ENCODE measurements at regions of chr3 and their contacts with region 1.

Region 1: DNA sequence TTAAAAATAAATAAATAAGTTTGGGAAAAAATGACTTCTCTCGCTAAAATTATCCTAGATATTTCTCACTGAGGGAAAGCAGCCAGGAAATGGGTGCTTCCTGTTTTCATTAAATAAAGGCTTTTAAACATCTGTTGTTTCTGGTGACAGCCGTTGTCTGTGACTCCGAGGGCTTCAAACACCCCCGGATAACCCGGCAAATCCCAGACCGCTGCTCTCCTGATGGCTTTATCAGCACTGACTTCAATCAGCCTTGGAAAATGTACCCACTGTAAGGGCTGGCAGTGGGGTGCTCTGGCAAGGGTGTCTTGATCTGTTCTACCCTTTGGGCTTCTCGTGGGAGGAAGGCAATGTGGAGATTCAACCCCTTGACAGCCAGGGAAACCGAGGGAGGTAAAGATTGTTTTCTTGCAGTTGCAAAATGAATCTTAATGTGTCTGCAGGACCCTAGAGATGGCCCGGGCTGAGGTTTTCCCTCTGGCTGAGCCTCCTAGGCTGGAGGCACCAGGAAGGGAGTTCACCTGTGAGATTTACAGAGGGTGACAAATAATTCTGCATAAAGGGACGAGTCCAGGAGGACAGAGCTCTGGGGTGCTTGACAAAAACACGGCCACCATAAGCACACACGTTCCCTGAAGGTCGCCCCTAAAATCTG is 33.6 kb upstream of the SEC13 start:
- DNase-seq: peak; percentile 46
- H3K4me3 ChIP-seq: no peak overlapping the region
- H3K27ac ChIP-seq: no peak overlapping the region
- H3K4me1 ChIP-seq: no peaks in the 10 kb centered on the region
- H3K27me3 ChIP-seq: no peaks in the 10 kb centered on the region
- CTCF ChIP-seq: no peak

Region 2: GRCh38 chr3:10026084-10026890 is 328.2 kb before region 1 on chr3 and contains the start of gene FANCD2:
- CTCF ChIA-PET with region 1: no interaction called
- POLR2A ChIA-PET with region 1: interaction called, 10 read pairs
- intact Hi-C with region 1: no loop called
- DNase-seq: peak; percentile 94
- H3K4me3 ChIP-seq: peak within 1 kb of the TSS; percentile 86
- H3K27ac ChIP-seq: peak within 1 kb of the TSS; percentile 91
- H3K4me1 ChIP-seq: peaks cover 7% of the 10 kb centered on the region
- H3K27me3 ChIP-seq: no peaks in the 10 kb centered on the region
- CTCF ChIP-seq: no peak
- total RNA-seq, gene FANCD2: 64.6 and 69.2 TPM in 2 replicates

Region 3: DNA sequence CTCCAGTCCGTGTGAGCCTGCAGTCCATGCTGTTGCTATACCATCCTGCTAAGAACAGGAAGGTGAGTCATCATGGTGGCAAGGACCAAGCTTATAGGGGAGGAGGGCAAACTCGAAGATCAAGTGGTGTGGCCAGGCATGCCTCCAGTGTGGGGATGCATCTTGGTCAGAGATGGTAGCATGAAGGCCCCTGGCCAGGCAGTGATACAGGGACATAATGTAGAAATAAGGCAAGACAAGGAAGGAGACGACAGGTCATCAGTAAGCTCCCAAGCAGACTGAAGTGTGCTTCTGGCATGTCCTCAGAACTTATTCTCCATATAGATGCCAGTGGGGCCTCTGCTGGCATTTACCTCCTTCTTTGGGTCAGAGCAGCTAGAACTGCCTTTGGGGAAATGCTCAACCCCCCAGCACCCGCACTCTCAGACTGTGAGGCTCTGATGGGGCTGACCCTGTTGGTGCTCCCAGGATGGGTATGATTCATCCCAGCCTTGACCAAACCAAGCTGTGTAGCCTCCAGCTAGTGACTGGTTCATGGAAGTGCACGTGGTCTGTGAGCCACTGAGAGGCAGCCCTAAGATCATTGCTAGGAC is 203.4 kb after region 1 on chr3:
- CTCF ChIA-PET with region 1: no interaction called
- POLR2A ChIA-PET with region 1: no interaction called
- intact Hi-C with region 1: no loop called
- DNase-seq: no peak
- H3K4me3 ChIP-seq: no peak overlapping the region
- H3K27ac ChIP-seq: no peak overlapping the region
- H3K4me1 ChIP-seq: no peaks in the 10 kb centered on the region
- H3K27me3 ChIP-seq: peaks cover 7% of the 10 kb centered on the region
- CTCF ChIP-seq: no peak

Measured in A673 (cell line).